Natural killer cell (primary cell): ENCODE measurements at regions of chr16 and their contacts with region 1.

Region 1: DNA sequence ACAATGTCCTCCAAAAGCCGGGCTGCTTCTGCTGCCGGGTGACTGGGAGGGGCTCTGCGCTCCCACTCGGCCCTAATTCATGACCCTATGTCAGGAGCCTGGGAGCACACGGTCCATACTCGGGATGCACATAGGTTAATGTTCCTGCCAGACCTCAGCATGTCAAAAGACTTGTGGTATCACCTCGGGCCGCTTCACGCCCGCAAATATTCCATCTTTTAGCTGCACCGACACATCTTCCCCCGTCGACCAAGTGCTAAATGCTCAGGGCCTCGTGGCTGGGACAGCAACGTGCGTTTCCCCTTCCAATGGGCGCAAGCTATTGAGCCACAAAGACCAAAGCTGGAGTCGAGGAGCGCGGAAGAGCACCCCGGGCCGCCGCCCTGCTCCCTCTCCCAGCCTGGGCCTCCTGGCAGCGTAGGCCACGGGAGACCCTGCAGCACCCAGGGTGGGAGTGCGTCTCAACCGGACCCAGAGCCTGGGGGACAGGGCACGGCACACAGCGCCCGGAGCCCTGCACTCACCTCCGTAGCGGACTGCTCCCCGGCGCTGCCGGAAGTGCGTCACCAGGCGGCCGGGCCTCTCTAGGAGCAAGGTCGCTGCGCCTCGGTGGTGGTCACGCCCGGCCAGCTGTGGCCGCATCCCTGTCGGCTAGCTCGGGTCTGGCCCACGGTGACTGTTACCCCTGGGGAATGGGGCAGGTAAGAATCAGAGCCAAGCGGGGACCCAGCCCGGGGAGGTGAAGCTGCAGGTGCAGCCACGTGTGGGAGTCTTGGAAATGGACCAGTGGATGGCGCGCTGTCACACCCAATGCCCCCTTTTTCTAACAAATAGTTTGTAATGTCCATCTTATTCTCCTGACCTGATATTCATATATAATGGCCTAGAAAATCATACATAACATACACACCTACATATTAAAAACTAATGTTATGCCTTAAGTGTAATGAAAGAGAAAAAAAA is at the start of gene ZNF23:
- DNase-seq: peak; percentile 75 to 87
- ATAC-seq: peak; percentile 95 to 98 (median 98)
- H3K4me3 ChIP-seq: peak within 1 kb of the TSS; percentile 77
- H3K4me3 Mint-ChIP-seq: peak within 1 kb of the TSS; percentile 98
- H3K27ac ChIP-seq: peak within 1 kb of the TSS; percentile 86
- H3K27ac Mint-ChIP-seq: peak within 1 kb of the TSS; percentile 95 to 98
- H3K4me1 ChIP-seq: peaks cover 8% of the 10 kb centered on the region
- H3K4me1 Mint-ChIP-seq: peaks cover 16 to 22% of the 10 kb centered on the region in 2 donors
- H3K27me3 ChIP-seq: no peaks in the 10 kb centered on the region
- H3K27me3 Mint-ChIP-seq: peaks cover 0 to 3% of the 10 kb centered on the region in 2 donors
- CTCF ChIP-seq: peak; percentile 19
- total RNA-seq, gene ZNF23: 7.2 to 8.9 (median 7.8) TPM

Region 2: DNA sequence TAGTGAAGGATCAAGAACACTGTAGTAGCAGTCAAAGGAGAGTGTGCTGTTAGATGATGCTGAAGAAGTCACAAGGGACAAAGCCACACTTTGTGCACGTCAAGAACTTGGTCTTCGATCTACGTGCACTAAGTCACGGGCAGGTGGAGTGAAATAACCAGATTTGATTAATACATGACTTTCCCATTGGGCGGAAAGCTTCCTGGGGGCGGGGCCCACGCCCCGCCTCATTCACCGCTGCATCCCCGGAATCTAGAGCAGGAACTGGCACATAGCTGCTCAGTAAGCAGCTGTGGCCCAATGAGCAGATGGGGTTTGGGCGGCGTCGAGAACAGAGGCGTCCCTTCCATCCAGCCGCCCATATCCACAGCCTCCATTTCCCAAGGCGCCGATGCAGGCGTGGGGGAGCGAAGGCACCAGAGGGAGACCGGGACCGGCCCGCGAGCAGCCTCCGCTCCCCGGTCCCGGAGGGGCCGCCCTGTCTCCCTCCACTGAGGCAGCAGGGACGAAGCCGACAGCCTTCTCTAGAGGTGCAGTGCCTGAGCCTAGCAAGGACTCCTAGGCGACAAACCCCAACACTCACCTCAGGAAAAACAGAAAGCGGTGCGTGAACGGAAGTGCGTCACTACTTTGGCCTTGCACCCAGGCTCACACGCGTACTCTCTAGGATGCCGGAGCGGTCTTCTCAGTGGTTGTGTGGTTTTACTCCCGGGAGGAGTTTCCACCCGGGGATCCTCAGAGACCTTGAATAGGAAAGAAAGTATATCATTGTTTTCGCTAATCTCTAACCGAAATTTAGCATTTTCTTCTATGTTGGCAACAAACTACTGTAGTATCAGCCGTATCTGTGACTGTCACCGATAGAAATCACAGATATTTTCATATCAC is 22.3 kb after region 1 on chr16:
- intact Hi-C with region 1: loop called (anchors 1 kb)
- DNase-seq: peak; percentile 69 to 95
- ATAC-seq: peak; percentile 81 to 91 (median 91)
- H3K4me3 ChIP-seq: peak overlapping the region; percentile 66
- H3K4me3 Mint-ChIP-seq: peak overlapping the region; percentile 71
- H3K27ac ChIP-seq: peak overlapping the region; percentile 85
- H3K27ac Mint-ChIP-seq: peak overlapping the region; percentile 82 to 86
- H3K4me1 ChIP-seq: peaks cover 7% of the 10 kb centered on the region
- H3K4me1 Mint-ChIP-seq: peaks cover 7 to 16% of the 10 kb centered on the region in 2 donors
- H3K27me3 ChIP-seq: no peaks in the 10 kb centered on the region
- H3K27me3 Mint-ChIP-seq: peaks cover 0 to 4% of the 10 kb centered on the region in 2 donors
- CTCF ChIP-seq: no peak

Region 3: GRCh38 chr16:71537643-71538042 is 75.7 kb after region 1 on chr16:
- intact Hi-C with region 1: no loop called
- DNase-seq: peak in 1 of 2 donors; percentile 58
- ATAC-seq: peak in 1 of 3 donors; percentile 52
- H3K4me3 ChIP-seq: no peak overlapping the region
- H3K4me3 Mint-ChIP-seq: no peak overlapping the region
- H3K27ac ChIP-seq: no peak overlapping the region
- H3K27ac Mint-ChIP-seq: no peak overlapping the region
- H3K4me1 ChIP-seq: no peaks in the 10 kb centered on the region
- H3K4me1 Mint-ChIP-seq: peaks cover 4 to 5% of the 10 kb centered on the region in 2 donors
- H3K27me3 ChIP-seq: no peaks in the 10 kb centered on the region
- H3K27me3 Mint-ChIP-seq: peaks cover 8 to 37% of the 10 kb centered on the region in 2 donors
- CTCF ChIP-seq: peak; percentile 15